ENCODE measurements at regions of chrX and their contacts with region 1.

Region 1: DNA sequence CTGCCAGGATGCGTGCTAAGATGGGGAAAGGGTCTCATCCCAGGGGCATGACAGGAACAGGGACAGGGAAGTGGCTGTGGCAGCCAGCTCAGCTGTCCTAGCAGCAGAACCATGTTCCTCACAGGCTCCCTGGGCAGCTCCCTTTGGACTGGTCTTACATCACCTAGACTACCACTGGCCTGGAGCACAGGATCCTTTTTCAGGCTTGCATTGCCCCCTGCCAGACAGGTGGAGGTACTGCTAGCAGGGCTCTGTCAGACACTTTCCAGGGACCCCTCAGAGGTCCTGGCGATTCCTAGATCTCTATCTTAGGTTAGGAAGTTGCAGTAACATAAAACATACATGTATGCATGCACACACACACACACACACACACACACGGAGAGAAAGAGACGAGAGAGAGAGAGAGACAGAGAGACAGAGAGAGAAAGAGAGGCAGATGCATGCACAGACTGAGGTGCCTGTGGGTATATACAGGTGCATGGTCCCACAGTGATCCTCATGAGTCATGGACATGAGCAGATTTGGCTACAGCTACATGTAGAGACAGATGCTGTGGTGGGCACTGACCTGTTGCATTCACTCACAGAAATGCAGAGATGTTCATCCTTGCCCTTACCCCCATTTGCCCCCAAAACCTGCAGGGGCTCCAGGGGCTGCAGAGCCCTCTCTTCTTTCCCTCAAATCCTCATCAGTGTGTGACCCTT is 63.6 kb downstream of the STARD8 start:
- DNase-seq: no peak
- H3K4me3 Mint-ChIP-seq: no peak overlapping the region
- H3K27ac Mint-ChIP-seq: no peak overlapping the region
- H3K4me1 Mint-ChIP-seq: no peaks in the 10 kb centered on the region
- H3K27me3 Mint-ChIP-seq: no peaks in the 10 kb centered on the region

Region 2: DNA sequence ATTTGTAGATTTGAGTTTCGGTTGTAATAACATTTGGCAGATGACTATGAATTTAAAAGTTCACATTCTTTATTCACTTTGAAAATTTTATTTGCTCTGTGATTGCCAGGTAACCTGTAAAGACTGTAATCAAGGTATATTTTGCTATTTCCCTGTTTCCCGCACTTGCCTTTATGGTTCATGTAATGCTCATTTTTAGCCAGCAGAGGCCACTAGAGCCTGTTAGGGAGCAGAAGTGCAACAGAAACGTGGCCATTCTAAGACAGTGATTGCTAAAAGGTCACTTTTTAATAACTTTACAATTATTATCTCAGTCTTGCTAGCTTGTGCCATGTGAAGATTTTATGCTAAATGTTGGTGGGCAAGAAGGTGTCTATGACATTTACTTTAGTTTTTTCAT is 199.8 kb before region 1 on chrX:
- intact Hi-C with region 1: loop called (anchors 2 kb)
- DNase-seq: no peak
- H3K4me3 Mint-ChIP-seq: no peak overlapping the region
- H3K27ac Mint-ChIP-seq: no peak overlapping the region
- H3K4me1 Mint-ChIP-seq: peaks cover 17% of the 10 kb centered on the region
- H3K27me3 Mint-ChIP-seq: no peaks in the 10 kb centered on the region

Measured in activated T-helper 2 cell treated with anti-CD3 and anti-CD28 coated beads, Interferon-gamma antibody, Interleukin-2, Interleukin-4, amounts not matched to agents 10 μg/mL and 5 μg/mL and 100 μg/mL, durations not matched to agents 14 hours and 24 hours and 36 hours (primary cell).